IMR-90 (cell line): ENCODE measurements at regions of chr9 and their contacts with region 1.

Region 1: DNA sequence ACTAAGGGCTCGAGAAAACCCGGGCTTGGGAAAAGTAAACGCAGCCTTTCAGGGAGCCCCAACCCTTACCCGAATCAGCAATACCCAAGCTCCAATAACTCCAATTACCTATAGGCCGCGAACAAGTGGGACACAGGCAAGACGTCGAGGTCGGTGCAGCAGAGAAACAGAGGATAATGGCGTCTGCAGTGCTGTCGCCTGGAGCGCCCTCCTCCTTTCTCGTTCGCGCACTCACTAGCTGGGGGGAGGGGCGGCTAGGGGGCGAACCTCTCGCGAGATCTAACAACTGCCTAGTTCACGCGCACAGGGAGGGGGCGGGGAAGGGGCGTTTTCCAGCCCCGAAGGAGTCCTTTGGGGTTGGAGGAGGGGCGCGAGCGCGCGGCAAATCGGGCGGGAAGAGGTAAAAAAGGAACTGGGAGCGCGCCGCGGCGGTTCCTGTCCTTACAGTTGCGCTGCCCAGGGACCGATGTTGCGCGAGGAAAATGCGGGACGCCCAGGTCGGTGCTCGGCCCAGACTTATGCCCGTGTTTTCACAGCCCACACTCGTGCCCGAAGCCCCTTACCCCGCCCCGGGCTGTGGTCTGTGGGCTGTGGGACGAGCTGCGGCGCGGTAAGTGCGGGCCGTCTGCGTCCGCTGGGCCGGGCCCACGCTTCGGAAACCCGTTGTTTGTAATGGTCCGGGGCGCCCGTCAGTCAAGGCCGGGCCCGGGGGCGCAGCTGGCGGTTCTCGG is at the start of gene RMI1:
- DNase-seq: peak; percentile 96
- ATAC-seq: peak; percentile 88
- H3K4me3 ChIP-seq: peak within 1 kb of the TSS; percentile 88
- H3K27ac ChIP-seq: peak within 1 kb of the TSS; percentile 98
- H3K4me1 ChIP-seq: no peaks in the 10 kb centered on the region
- H3K27me3 ChIP-seq: no peaks in the 10 kb centered on the region
- CTCF ChIP-seq: 0 out of 2 replicates have a peak, but pooled peaks have one; percentile 13
- POLR2A ChIP-seq: peak; percentile 95
- RAD21 ChIP-seq: no peak
- total RNA-seq, gene RMI1: 6.8 and 12.8 TPM in 2 replicates

Region 2: DNA sequence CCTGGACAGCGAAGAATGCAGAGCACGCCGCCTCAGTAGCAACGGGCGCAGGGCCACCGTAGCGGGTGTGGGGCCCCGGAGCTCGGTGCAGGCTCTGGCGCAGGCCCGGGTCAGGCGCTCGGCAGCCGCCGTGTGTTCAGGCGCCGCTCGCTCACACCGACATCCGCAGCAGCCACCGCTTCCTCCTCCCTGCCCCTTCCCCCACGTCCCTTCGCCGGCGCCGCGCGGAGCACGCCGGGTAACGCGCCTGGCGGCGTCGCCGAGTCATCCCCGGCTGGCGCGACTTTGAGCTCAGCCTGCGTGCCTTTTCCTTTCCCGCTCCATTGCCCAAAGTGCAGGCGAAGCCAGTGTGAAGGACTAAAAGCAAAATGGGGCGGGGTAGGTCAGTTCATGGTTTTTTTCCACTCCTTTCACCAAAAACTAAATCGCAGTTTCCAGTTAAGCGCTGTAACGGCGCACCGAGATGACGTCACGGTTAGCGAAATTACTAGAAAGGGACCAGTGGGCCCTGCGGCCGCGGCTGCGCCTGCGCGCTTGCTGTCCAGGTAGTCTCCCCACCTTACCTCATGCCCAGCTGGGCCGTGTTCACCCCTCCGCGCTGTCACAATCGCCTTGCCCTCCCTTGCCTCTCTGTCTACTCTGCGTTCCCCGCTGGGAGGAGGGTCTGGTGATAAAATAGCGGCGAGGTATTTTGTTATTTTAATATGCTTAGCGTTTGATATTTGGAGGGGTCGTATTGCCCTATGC is 272.6 kb before region 1 on chr9 and contains the start of gene UBQLN1:
- CTCF ChIA-PET with region 1: no interaction called
- POLR2A ChIA-PET with region 1: no interaction called
- dilution Hi-C with region 1: no loop called
- in situ Hi-C with region 1: no loop called
- intact Hi-C with region 1: loop called (anchors 10 kb)
- DNase-seq: peak; percentile 94
- ATAC-seq: peak; percentile 92
- H3K4me3 ChIP-seq: peak within 1 kb of the TSS; percentile 82
- H3K27ac ChIP-seq: peak within 1 kb of the TSS; percentile 89
- H3K4me1 ChIP-seq: no peaks in the 10 kb centered on the region
- H3K27me3 ChIP-seq: no peaks in the 10 kb centered on the region
- CTCF ChIP-seq: no peak
- POLR2A ChIP-seq: peak; percentile 84; the same call in 1 of the 2 replicates
- RAD21 ChIP-seq: no peak
- total RNA-seq, gene UBQLN1: 129 and 164 TPM in 2 replicates

Region 3: DNA sequence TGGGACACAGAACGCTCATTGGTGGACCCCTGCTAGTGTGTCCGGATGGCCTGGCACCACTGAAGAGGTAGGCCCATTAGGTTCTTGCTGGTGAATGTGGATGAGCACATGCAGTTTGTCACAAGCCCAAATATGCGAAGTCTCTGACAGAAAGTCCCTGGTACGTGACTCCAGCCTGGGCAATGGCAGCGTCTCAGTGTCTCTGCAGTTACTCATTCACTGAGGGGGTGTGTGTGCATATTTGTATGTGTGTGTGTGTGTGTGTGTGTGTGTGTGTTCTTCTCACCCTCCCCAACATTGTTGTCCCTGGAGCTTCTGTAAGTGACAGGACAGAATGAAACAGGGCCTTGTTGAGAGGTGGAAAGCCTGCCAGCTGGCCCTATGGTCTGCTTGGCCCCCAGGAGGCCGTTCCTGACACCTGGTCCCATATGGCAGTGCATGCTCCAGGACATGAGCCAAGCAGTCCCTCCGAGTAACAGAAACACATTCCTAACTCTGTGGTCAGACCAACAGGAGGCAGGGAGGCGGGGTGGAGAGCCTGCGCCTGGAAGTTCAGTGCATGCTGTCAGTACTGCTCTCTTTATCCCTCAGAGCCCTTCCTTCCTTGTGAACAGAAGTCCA is 190.1 kb after region 1 on chr9:
- CTCF ChIA-PET with region 1: no interaction called
- POLR2A ChIA-PET with region 1: interaction called, 3 read pairs
- dilution Hi-C with region 1: no loop called
- in situ Hi-C with region 1: loop called (anchors 5 kb)
- intact Hi-C with region 1: loop called (anchors 2 kb)
- DNase-seq: peak; percentile 98
- ATAC-seq: peak; percentile 96
- H3K4me3 ChIP-seq: no peak overlapping the region
- H3K27ac ChIP-seq: peak overlapping the region; percentile 81
- H3K4me1 ChIP-seq: peaks cover 17% of the 10 kb centered on the region
- H3K27me3 ChIP-seq: no peaks in the 10 kb centered on the region
- CTCF ChIP-seq: 0 out of 2 replicates have a peak, but pooled peaks have one; percentile 13
- POLR2A ChIP-seq: no peak
- RAD21 ChIP-seq: peak; percentile 23; the same call in 1 of the 2 replicates